Activated naive CD4-positive, alpha-beta T cell treated with anti-CD3 and anti-CD28 coated beads for 36 hours (primary cell): ENCODE measurements at regions of chr17 and their contacts with region 1.

Region 1: DNA sequence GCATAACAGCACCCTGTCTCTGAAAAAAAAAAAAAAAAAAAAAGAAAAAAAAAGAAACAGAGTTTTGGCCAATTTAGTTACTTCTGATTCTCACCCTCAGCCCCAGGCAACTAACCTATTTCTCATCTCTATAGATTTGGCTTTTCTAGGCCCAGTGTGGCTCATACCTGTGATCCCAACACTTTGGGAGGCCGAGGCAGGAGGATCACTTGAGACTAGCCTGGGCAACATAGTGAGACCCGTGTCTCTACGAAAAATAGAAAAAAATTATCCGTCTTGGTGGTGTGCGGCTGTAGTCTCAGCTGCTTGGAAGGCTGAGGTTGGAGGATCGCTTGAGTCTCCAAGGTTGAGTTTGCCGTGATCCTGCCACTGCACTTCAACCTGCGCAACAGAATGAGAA is 8.7 kb downstream of the RPS6KB1 start:
- DNase-seq: no peak
- H3K4me3 Mint-ChIP-seq: no peak overlapping the region
- H3K27ac Mint-ChIP-seq: no peak overlapping the region
- H3K4me1 Mint-ChIP-seq: peaks cover 42% of the 10 kb centered on the region
- H3K27me3 Mint-ChIP-seq: no peaks in the 10 kb centered on the region

Region 2: GRCh38 chr17:59914274-59914854 is 12.8 kb after region 1 on chr17:
- CTCF ChIA-PET with region 1: interaction called, 11 read pairs
- intact Hi-C with region 1: no loop called
- DNase-seq: peak; percentile 32
- H3K4me3 Mint-ChIP-seq: no peak overlapping the region
- H3K27ac Mint-ChIP-seq: no peak overlapping the region
- H3K4me1 Mint-ChIP-seq: peaks cover 2% of the 10 kb centered on the region
- H3K27me3 Mint-ChIP-seq: no peaks in the 10 kb centered on the region

Region 3: GRCh38 chr17:59941131-59941530 is 39.5 kb after region 1 on chr17:
- CTCF ChIA-PET with region 1: no interaction called
- intact Hi-C with region 1: no loop called
- DNase-seq: peak; percentile 38
- H3K4me3 Mint-ChIP-seq: peak overlapping the region; percentile 39
- H3K27ac Mint-ChIP-seq: peak overlapping the region; percentile 98
- H3K4me1 Mint-ChIP-seq: peaks cover 59% of the 10 kb centered on the region
- H3K27me3 Mint-ChIP-seq: no peaks in the 10 kb centered on the region

Region 4: GRCh38 chr17:60049936-60050335 is 148.3 kb after region 1 on chr17:
- CTCF ChIA-PET with region 1: no interaction called
- intact Hi-C with region 1: no loop called
- DNase-seq: no peak
- H3K4me3 Mint-ChIP-seq: no peak overlapping the region
- H3K27ac Mint-ChIP-seq: no peak overlapping the region
- H3K4me1 Mint-ChIP-seq: no peaks in the 10 kb centered on the region
- H3K27me3 Mint-ChIP-seq: no peaks in the 10 kb centered on the region